ENCODE measurements at regions of chr3 and their contacts with region 1.

Region 1: GRCh38 chr3:192727032-192727847 is at the start of gene FGF12:
- DNase-seq: peak; percentile 80
- ATAC-seq: peak; percentile 93
- total RNA-seq, gene FGF12: 340 TPM

Region 2: GRCh38 chr3:192655040-192655439 is 72.2 kb before region 1 on chr3:
- intact Hi-C with region 1: loop called (anchors 5 kb)
- DNase-seq: no peak
- ATAC-seq: peak; percentile 69

Region 3: DNA sequence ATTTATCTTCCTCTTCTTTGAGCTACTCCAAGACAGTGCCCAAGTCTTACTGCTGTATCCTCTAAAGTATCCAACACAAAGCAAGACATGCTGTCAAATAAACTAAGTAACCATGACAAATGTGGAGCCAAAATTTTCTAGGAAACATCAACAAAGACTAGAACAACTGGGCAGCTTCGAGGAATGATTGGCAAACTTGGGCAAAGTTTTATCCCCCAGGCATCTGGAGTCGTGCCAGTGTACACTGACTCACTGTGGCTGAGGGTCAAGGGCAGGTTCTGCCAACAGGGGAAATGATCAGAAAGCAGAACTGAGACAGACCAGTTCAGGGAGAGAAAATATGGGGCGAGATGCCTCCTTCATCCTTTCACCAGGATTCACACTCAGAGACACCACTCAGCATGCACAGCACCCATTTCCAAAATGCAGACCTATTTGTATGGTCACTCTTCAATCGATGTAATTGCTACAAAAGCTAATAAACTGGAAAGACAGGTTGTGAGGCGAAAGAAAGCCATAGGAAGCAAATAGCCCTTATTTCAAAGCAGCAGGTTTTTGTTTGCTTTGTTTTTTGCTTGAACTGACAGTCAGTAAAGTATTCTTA is 124.7 kb after region 1 on chr3:
- intact Hi-C with region 1: no loop called
- DNase-seq: no peak
- ATAC-seq: peak; percentile 31